ENCODE measurements at regions of chr1 and their contacts with region 1.

Region 1: DNA sequence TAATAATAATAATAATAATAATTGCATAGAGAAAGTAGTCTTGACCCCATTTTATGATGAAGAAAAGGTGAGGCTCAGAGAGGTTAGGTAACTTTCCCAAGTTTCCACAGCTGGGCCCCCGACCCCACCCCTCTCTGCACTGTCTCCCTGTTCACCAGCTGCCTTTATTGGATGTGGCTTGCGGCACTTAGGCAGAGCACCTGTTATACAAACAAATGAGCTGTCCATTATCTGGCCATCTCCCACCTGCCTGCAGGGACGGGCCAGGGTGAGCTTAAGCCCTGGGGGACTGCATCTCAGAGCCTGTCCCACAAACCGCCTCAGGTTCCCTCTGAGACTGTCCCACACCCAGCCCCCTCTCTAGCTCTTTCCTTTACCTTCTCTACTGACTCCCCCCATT is 10.1 kb upstream of the EFNA1 start:
- DNase-seq: no peak
- ATAC-seq: no peak
- H3K4me3 ChIP-seq: no peak overlapping the region
- H3K27ac ChIP-seq: no peak overlapping the region
- H3K4me1 ChIP-seq: no peaks in the 10 kb centered on the region
- H3K27me3 ChIP-seq: no peaks in the 10 kb centered on the region
- CTCF ChIP-seq: no peak

Region 2: GRCh38 chr1:155244368-155245162 is 126.9 kb after region 1 on chr1:
- CTCF ChIA-PET with region 1: no interaction called
- POLR2A ChIA-PET with region 1: interaction called, 15 read pairs
- in situ Hi-C with region 1: no loop called
- intact Hi-C with region 1: no loop called
- DNase-seq: peak; percentile 95
- ATAC-seq: peak; percentile 95
- H3K4me3 ChIP-seq: peak overlapping the region; percentile 60 to 85
- H3K27ac ChIP-seq: peak overlapping the region; percentile 95
- H3K4me1 ChIP-seq: peaks cover 24% of the 10 kb centered on the region
- H3K27me3 ChIP-seq: no peaks in the 10 kb centered on the region
- CTCF ChIP-seq: no peak

Measured in Panc1 (cell line).